OCI-LY7 (cell line): ENCODE measurements at regions of chr7 and their contacts with region 1.

Region 1: GRCh38 chr7:38660427-38661099 is 29.4 kb upstream of the AMPH start:
- DNase-seq: peak; percentile 44
- H3K4me3 ChIP-seq: no peak overlapping the region
- H3K27ac ChIP-seq: no peak overlapping the region
- H3K4me1 ChIP-seq: no peaks in the 10 kb centered on the region
- CTCF ChIP-seq: peak; percentile 84

Region 2: GRCh38 chr7:37982423-37982822 is 678.1 kb before region 1 on chr7:
- CTCF ChIA-PET with region 1: no interaction called
- POLR2A ChIA-PET with region 1: no interaction called
- intact Hi-C with region 1: no loop called
- DNase-seq: no peak
- H3K4me3 ChIP-seq: no peak overlapping the region
- H3K27ac ChIP-seq: no peak overlapping the region
- H3K4me1 ChIP-seq: no peaks in the 10 kb centered on the region
- CTCF ChIP-seq: no peak

Region 3: GRCh38 chr7:38398725-38399321 is 261.7 kb before region 1 on chr7:
- CTCF ChIA-PET with region 1: no interaction called
- POLR2A ChIA-PET with region 1: no interaction called
- intact Hi-C with region 1: loop called (anchors 1 kb)
- DNase-seq: peak; percentile 61
- H3K4me3 ChIP-seq: no peak overlapping the region
- H3K27ac ChIP-seq: no peak overlapping the region
- H3K4me1 ChIP-seq: peaks cover 4% of the 10 kb centered on the region
- CTCF ChIP-seq: peak; percentile 93